Activated naive CD8-positive, alpha-beta T cell treated with anti-CD3 and anti-CD28 coated beads, Interleukin-2, amount 10 ng/mL, durations not matched to agents 7 days and 5 days (primary cell): ENCODE measurements at regions of chr10 and their contacts with region 1.

Region 1: GRCh38 chr10:11165591-11166543 is 148.2 kb downstream of the CELF2 start:
- DNase-seq: peak; percentile 71
- ATAC-seq: peak; percentile 66
- H3K4me3 Mint-ChIP-seq: no peak overlapping the region
- H3K27ac Mint-ChIP-seq: peak overlapping the region; percentile 99
- H3K4me1 Mint-ChIP-seq: peaks cover 41% of the 10 kb centered on the region
- H3K27me3 Mint-ChIP-seq: no peaks in the 10 kb centered on the region

Region 2: DNA sequence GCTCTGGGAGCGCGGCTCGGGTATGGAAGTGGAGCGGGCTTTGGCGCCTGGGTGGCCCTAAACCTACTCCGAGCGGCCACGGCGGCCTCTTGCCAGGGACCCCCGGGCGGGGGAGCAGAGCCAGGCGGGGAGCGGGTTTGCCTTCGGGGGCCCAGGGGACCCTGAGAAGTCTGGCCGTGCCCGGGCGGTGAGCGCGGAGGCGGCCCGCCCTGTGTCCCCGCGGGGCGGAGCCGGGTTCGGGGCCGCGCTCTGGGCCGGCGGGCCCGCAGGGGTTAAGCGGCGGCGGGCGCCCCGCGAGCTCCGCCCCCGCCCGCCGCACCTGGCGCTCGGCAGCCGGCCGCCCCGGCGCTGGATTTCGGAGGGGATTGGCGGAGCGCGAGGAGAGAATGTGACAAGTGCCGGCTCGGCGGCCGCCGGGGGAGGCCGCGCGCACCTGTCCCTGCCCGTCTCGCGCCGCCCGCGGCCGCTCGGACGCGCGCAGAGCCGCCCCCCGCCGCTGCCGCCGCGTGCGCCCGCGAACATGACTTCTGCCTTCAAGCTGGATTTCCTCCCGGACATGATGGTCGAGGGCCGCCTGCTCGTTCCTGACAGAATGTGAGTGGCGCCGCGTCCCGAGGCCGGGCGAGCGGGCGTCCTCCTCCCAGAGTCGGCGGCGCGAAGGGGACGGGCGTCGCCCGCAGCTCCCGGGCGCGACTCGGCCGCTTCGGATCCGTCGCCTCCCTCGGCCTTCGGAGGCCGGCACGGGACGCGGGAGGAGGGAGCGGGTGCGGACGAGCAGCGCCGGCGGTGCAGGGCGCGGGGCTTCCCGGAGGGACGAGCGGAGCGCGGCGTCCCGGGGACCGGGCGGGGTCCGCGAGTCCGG is 148.1 kb before region 1 on chr10 and contains the start of gene CELF2:
- POLR2A ChIA-PET with region 1: interaction called, 13 read pairs
- DNase-seq: peak; percentile 71
- ATAC-seq: peak; percentile 86
- H3K4me3 Mint-ChIP-seq: peak within 1 kb of the TSS; percentile 70
- H3K27ac Mint-ChIP-seq: no peak within 1 kb of the TSS
- H3K4me1 Mint-ChIP-seq: peaks cover 8% of the 10 kb centered on the region
- H3K27me3 Mint-ChIP-seq: peaks cover 85% of the 10 kb centered on the region
- total RNA-seq, gene CELF2: 168 TPM

Region 3: GRCh38 chr10:11113156-11113555 is 52.7 kb before region 1 on chr10:
- POLR2A ChIA-PET with region 1: interaction called, 45 read pairs
- DNase-seq: no peak
- ATAC-seq: peak; percentile 78
- H3K4me3 Mint-ChIP-seq: peak overlapping the region; percentile 23
- H3K27ac Mint-ChIP-seq: peak overlapping the region; percentile 61
- H3K4me1 Mint-ChIP-seq: peaks cover 8% of the 10 kb centered on the region
- H3K27me3 Mint-ChIP-seq: peaks cover 1% of the 10 kb centered on the region

Region 4: DNA sequence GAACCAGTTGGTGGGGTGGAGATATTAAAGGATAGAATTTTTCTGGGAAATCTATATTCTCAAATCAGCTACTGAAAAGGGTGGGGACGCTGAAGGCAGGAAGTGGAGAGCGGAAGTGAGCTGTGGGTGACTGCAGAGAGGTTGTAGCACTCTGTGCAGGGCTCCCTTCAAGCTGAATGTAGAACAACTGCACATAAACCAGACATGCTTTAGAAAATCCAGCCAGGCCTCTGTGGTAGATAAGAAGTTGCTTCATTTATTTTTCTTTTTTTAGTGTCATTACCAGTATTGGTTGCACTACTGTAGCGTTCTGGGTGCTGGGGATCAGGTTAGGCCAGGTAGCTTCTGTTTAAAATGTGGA is 20.4 kb before region 1 on chr10:
- POLR2A ChIA-PET with region 1: interaction called, 996 read pairs
- DNase-seq: no peak
- ATAC-seq: peak; percentile 79
- H3K4me3 Mint-ChIP-seq: peak overlapping the region; percentile 91
- H3K27ac Mint-ChIP-seq: peak overlapping the region; percentile 98
- H3K4me1 Mint-ChIP-seq: peaks cover 83% of the 10 kb centered on the region
- H3K27me3 Mint-ChIP-seq: no peaks in the 10 kb centered on the region

Region 5: GRCh38 chr10:11178606-11179515 is 13.0 kb after region 1 on chr10:
- POLR2A ChIA-PET with region 1: interaction called, 596 read pairs
- DNase-seq: peak; percentile 78
- ATAC-seq: peak; percentile 70
- H3K4me3 Mint-ChIP-seq: no peak overlapping the region
- H3K27ac Mint-ChIP-seq: no peak overlapping the region
- H3K4me1 Mint-ChIP-seq: peaks cover 95% of the 10 kb centered on the region
- H3K27me3 Mint-ChIP-seq: no peaks in the 10 kb centered on the region

Region 6: DNA sequence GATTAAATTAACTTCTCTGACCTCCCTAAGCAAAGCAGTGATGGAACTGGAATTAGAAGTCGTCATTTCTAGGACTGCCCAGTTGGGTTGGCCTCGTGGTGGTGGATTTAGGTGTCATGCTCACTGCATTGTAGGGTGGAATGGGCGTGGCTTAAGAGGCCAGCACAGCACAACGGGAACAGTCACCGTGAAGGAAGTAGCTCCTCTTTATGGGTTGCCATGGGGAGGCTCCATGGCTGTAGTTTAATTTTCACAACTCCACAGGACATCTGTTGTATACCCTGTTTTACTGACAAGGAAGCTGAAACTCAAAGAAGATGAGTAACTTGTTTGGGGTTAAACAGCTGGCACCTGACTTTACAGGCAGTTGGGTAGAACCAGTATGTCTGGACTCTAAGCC is 60.1 kb after region 1 on chr10:
- POLR2A ChIA-PET with region 1: interaction called, 14 read pairs
- DNase-seq: no peak
- ATAC-seq: peak; percentile 70
- H3K4me3 Mint-ChIP-seq: peak overlapping the region; percentile 66
- H3K27ac Mint-ChIP-seq: peak overlapping the region; percentile 84
- H3K4me1 Mint-ChIP-seq: peaks cover 75% of the 10 kb centered on the region
- H3K27me3 Mint-ChIP-seq: no peaks in the 10 kb centered on the region

Region 7: DNA sequence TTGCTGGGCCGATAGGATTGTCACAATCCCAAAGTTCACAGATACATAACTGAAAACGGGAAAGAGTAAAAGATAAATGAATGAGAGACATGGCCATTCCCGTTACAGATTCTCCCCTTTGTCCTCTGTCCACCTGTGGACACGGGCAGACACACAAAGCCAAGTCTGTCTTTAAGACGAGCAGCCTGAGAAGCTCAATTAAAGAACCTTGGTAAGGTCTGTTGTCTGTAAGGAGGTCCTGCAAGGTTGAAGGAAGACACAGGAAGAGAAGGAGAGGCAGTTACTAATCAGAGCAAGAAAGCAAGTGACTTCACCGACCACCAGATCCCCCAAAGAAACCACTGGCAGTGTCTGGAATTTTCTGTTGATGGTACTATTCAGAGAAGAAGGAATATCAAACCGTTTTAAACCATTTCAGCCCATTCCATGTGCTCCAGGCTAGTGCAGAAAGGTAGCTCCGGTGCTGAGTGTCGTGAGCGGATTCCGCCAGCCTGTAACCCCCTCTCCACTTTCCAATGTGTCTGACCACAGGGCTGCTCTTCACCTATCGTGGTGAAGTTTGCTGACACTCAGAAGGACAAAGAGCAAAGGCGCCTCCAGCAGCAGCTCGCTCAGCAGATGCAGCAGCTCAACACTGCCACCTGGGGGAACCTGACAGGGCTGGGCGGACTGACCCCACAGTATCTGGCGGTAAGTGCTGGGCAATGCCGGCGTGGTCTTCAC is 104.4 kb after region 1 on chr10:
- POLR2A ChIA-PET with region 1: interaction called, 12 read pairs
- DNase-seq: peak; percentile 61
- ATAC-seq: peak; percentile 66
- H3K4me3 Mint-ChIP-seq: no peak overlapping the region
- H3K27ac Mint-ChIP-seq: peak overlapping the region; percentile 75
- H3K4me1 Mint-ChIP-seq: peaks cover 28% of the 10 kb centered on the region
- H3K27me3 Mint-ChIP-seq: no peaks in the 10 kb centered on the region

Region 8: GRCh38 chr10:11286261-11286852 is 120.5 kb after region 1 on chr10:
- POLR2A ChIA-PET with region 1: no interaction called
- DNase-seq: no peak
- ATAC-seq: peak; percentile 23
- H3K4me3 Mint-ChIP-seq: no peak overlapping the region
- H3K27ac Mint-ChIP-seq: no peak overlapping the region
- H3K4me1 Mint-ChIP-seq: no peaks in the 10 kb centered on the region
- H3K27me3 Mint-ChIP-seq: no peaks in the 10 kb centered on the region